ENCODE measurements at regions of chr5 and their contacts with region 1.

Region 1: DNA sequence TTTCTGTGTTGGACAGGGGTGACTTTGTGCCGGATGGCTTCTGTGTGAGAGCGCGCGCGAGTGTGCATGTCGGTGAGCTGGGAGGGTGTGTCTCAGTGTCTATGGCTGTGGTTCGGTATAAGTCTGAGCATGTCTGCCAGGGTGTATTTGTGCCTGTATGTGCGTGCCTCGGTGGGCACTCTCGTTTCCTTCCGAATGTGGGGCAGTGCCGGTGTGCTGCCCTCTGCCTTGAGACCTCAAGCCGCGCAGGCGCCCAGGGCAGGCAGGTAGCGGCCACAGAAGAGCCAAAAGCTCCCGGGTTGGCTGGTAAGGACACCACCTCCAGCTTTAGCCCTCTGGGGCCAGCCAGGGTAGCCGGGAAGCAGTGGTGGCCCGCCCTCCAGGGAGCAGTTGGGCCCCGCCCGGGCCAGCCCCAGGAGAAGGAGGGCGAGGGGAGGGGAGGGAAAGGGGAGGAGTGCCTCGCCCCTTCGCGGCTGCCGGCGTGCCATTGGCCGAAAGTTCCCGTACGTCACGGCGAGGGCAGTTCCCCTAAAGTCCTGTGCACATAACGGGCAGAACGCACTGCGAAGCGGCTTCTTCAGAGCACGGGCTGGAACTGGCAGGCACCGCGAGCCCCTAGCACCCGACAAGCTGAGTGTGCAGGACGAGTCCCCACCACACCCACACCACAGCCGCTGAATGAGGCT is at the start of gene ADRB2:
- DNase-seq: peak; percentile 99
- H3K4me3 Mint-ChIP-seq: peak within 1 kb of the TSS; percentile 90
- H3K27ac Mint-ChIP-seq: peak within 1 kb of the TSS; percentile 91
- H3K4me1 Mint-ChIP-seq: peaks cover 44% of the 10 kb centered on the region
- H3K27me3 Mint-ChIP-seq: no peaks in the 10 kb centered on the region
- CTCF ChIP-seq: no peak
- total RNA-seq, gene ADRB2: 6.9 and 9.5 TPM in 2 replicates

Region 2: GRCh38 chr5:148746826-148747535 is 79.2 kb before region 1 on chr5:
- CTCF ChIA-PET with region 1: interaction called, 142 read pairs
- POLR2A ChIA-PET with region 1: interaction called, 69 read pairs
- intact Hi-C with region 1: no loop called
- DNase-seq: no peak
- H3K4me3 Mint-ChIP-seq: no peak overlapping the region
- H3K27ac Mint-ChIP-seq: no peak overlapping the region
- H3K4me1 Mint-ChIP-seq: no peaks in the 10 kb centered on the region
- H3K27me3 Mint-ChIP-seq: no peaks in the 10 kb centered on the region
- CTCF ChIP-seq: no peak

Region 3: DNA sequence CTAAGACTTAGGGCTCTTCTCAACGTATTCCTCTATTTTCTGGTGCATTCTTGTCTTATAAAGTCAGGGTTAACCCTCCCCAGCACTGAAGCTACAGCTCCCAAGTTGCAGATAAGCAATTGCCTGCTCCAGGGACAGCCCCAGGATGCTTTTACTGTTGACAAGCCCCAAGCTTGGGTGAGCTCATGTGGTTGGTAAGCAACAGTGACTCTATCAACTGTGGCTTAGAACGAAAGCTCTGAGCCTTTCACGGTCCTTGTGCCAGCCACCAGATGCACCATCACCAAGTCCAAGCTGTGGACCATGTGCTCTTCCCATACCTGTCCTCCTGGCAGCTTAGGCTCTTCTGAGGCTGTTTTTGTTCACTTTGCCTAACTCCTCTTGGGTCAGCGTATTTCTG is 13.8 kb after region 1 on chr5:
- CTCF ChIA-PET with region 1: interaction called, 19 read pairs
- POLR2A ChIA-PET with region 1: interaction called, 11 read pairs
- intact Hi-C with region 1: no loop called
- DNase-seq: no peak
- H3K4me3 Mint-ChIP-seq: no peak overlapping the region
- H3K27ac Mint-ChIP-seq: peak overlapping the region; percentile 29
- H3K4me1 Mint-ChIP-seq: peaks cover 44% of the 10 kb centered on the region
- H3K27me3 Mint-ChIP-seq: no peaks in the 10 kb centered on the region
- CTCF ChIP-seq: no peak

Region 4: DNA sequence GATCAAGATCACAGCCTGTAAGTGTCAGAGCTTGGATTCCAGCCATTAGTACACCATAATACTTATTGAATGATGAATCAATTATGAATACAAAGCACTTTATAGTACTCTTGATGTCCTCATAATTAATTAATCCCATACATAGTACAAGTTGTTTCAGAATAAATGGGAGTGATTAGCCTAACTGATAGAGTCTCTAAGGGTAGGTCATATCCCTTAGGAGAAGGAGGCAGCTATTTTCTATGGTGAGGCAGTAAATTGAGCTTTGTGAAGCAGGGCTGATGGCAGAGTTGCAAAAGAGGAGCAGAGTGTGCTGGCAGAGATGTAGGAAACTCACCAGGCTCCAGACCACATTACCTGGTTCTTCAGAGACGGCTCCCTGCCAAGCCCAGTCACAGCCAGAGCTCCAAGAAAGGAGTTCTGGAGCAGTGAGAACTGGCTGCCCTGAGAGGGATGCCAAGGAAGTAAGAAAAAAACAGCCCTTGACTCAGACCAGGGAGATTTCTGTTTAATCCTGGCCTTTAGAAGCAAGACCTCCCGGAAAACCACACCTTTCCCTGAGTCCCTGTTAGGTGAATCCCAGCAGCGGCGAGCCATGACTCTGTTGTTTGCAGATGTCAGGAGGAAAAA is 123.8 kb after region 1 on chr5:
- CTCF ChIA-PET with region 1: interaction called, 20 read pairs
- POLR2A ChIA-PET with region 1: interaction called, 70 read pairs
- intact Hi-C with region 1: no loop called
- DNase-seq: peak; percentile 97
- H3K4me3 Mint-ChIP-seq: no peak overlapping the region
- H3K27ac Mint-ChIP-seq: peak overlapping the region; percentile 92
- H3K4me1 Mint-ChIP-seq: peaks cover 17% of the 10 kb centered on the region
- H3K27me3 Mint-ChIP-seq: no peaks in the 10 kb centered on the region
- CTCF ChIP-seq: no peak

Region 5: GRCh38 chr5:148972958-148973357 is 146.8 kb after region 1 on chr5:
- CTCF ChIA-PET with region 1: interaction called, 16 read pairs
- POLR2A ChIA-PET with region 1: interaction called, 136 read pairs
- intact Hi-C with region 1: no loop called
- DNase-seq: peak; percentile 94
- H3K4me3 Mint-ChIP-seq: peak overlapping the region; percentile 28
- H3K27ac Mint-ChIP-seq: peak overlapping the region; percentile 93
- H3K4me1 Mint-ChIP-seq: peaks cover 88% of the 10 kb centered on the region
- H3K27me3 Mint-ChIP-seq: no peaks in the 10 kb centered on the region
- CTCF ChIP-seq: no peak

Region 6: GRCh38 chr5:148998174-148998797 is 172.1 kb after region 1 on chr5:
- CTCF ChIA-PET with region 1: interaction called, 150 read pairs
- POLR2A ChIA-PET with region 1: interaction called, 255 read pairs
- intact Hi-C with region 1: loop called (anchors 1 kb)
- DNase-seq: peak; percentile 93
- H3K4me3 Mint-ChIP-seq: no peak overlapping the region
- H3K27ac Mint-ChIP-seq: peak overlapping the region; percentile 73
- H3K4me1 Mint-ChIP-seq: peaks cover 60% of the 10 kb centered on the region
- H3K27me3 Mint-ChIP-seq: no peaks in the 10 kb centered on the region
- CTCF ChIP-seq: peak; percentile 79